GM13976 (cell line): ENCODE measurements at regions of chr17 and their contacts with region 1.

Region 1: GRCh38 chr17:62975206-62975605 is 9.2 kb downstream of the TANC2 start:
- DNase-seq: no peak
- CTCF ChIP-seq: no peak

Region 2: DNA sequence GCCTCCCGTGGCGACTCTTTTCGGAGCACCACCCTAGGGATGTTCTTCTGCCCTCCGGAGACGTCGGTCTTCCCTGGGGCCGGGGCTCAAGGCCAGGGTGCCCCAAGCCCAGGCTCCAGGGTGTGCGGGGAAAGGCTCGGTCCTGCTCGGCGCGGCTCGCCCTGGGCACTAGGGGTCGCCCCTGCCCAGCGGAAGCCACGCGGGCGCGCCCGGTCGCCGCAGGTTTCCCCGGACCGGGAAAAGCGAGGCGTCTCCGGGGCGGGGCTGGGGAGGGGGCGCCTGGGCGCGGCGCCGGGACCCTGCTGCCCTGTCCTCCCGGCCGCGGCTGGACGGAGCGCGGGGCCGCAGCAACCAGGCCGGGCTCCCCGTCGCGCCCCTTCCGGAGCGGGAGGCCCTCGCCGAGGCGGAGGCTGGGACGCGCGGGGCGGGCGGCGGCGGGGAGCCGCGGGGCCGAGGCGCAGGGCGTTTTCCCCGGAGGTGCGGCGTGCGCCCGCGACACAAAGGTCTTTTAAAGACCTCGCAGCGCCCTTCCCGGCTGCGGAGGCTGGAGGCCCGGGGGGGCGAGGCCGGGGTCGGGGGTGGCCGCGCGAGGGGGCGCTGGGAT is 271.3 kb before region 1 on chr17:
- in situ Hi-C with region 1: loop called (anchors 10 kb)
- DNase-seq: peak; percentile 86
- CTCF ChIP-seq: peak; percentile 93

Region 3: DNA sequence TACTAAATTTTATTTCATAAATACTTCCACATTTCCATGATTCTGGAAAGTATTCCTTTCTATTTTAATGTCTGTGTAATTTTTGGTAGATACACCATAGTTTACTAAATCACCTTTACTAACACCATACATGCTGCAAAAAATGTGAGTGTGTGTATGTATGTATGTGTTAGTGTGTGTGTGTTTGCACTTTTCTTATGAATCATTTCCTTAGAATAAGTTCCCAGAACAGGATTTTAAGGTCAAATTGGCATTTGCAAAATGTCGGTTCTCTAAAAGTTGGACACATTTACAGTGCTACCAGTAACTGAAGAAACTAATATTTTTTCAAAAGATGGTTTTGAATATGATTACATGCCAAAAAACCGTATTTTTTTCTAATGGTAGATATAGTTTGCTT is 333.8 kb after region 1 on chr17:
- in situ Hi-C with region 1: no loop called
- DNase-seq: no peak
- CTCF ChIP-seq: no peak